Tibial artery (tissue), 4 donors: ENCODE measurements at regions of chr13 and their contacts with region 1.

Region 1: GRCh38 chr13:93559718-93560117 is 333.1 kb downstream of the GPC6 start:
- DNase-seq: no peak
- H3K4me3 ChIP-seq: no peak overlapping the region
- H3K27ac ChIP-seq: no peak overlapping the region
- H3K4me1 ChIP-seq: peaks cover 0 to 8% (median 0%) of the 10 kb centered on the region in 4 donors
- H3K27me3 ChIP-seq: no peaks in the 10 kb centered on the region
- CTCF ChIP-seq: no peak

Region 2: GRCh38 chr13:93577105-93577504 is 17.4 kb after region 1 on chr13:
- intact Hi-C with region 1: loop called (anchors 2 kb)
- DNase-seq: no peak
- H3K4me3 ChIP-seq: no peak overlapping the region
- H3K27ac ChIP-seq: no peak overlapping the region
- H3K4me1 ChIP-seq: no peaks in the 10 kb centered on the region
- H3K27me3 ChIP-seq: no peaks in the 10 kb centered on the region
- CTCF ChIP-seq: no peak